Mammary epithelial cell (primary cell): ENCODE measurements at regions of chr7 and their contacts with region 1.

Region 1: DNA sequence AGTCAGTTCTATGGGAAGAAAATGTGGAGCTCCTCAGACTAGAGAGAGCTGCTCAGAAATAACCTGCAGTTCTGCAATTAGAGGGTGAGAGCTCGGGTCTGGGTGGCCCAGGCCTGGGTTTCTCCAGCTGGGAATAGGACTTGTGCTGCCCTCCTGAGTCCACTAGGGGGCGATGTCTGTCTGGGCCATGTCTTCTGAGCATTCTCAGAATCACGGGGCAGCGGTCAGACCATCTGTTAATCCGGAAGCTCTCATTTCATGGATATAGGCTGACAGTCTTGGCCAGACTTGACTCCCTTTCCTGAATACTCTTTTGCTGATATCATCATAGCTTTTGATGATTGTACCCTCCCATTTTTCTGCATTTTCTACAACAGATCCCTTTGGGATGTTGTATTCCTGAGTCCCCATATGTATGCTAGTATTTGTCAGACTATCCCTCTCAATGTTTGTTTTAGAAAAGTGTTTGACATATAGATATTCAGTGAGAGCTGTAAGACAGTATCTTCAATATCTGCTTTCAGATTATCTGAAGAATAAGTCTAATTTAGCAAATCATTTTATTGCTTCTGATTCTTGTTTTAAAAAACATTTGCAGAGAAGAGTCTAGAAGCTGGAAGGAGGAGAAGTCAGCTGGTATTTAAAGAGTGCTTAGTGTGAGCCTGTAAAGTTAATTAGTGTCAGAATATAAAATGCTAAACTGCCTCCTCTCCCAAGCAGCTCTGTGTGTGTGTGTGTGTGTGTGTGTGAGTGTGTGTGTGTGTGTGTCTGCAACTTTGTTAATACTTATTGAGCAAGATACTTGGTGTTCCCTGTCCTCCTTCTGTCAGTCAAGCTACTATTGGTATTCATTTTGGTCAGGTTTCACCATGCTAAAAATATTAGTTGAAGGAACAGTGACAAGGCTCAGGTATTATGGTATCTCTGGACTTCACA is 38.0 kb downstream of the STARD3NL start:
- DNase-seq: peak; percentile 40
- H3K4me3 ChIP-seq: no peak overlapping the region
- H3K27ac ChIP-seq: no peak overlapping the region
- H3K4me1 ChIP-seq: no peaks in the 10 kb centered on the region
- H3K27me3 ChIP-seq: no peaks in the 10 kb centered on the region
- CTCF ChIP-seq: peak; percentile 86 to 94

Region 2: DNA sequence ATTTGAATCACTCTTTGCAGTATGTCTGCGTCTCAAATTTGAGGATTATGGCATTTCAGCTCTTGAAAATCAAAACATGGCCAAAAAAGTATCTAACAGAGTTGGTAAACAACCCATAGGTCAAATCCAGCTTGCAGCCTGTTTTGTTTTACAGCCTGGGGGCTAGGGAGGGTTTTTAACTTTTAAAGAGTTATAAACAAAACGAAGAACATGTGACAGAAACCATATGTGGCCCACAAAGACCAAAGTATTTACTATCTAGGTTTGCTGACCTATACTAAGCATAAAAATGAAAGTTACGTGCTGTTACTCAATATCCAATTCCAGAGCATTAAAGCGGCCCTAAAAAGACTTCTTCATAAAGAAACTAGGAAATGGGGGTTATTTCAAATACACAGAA is 93.5 kb before region 1 on chr7:
- CTCF ChIA-PET with region 1: no interaction called
- dilution Hi-C with region 1: no loop called
- in situ Hi-C with region 1: no loop called
- intact Hi-C with region 1: no loop called
- DNase-seq: no peak
- H3K4me3 ChIP-seq: no peak overlapping the region
- H3K27ac ChIP-seq: no peak overlapping the region
- H3K4me1 ChIP-seq: no peaks in the 10 kb centered on the region
- H3K27me3 ChIP-seq: peaks cover 1% of the 10 kb centered on the region
- CTCF ChIP-seq: no peak

Region 3: GRCh38 chr7:38178004-38178694 is 37.9 kb before region 1 on chr7 and contains the start of gene STARD3NL:
- CTCF ChIA-PET with region 1: interaction called, 3 read pairs
- dilution Hi-C with region 1: no loop called
- in situ Hi-C with region 1: no loop called
- intact Hi-C with region 1: loop called (anchors 1 kb)
- DNase-seq: peak; percentile 100
- H3K4me3 ChIP-seq: peak within 1 kb of the TSS; percentile 71 to 91 (median 84)
- H3K27ac ChIP-seq: peak within 1 kb of the TSS; percentile 84
- H3K4me1 ChIP-seq: peaks cover 16% of the 10 kb centered on the region
- H3K27me3 ChIP-seq: no peaks in the 10 kb centered on the region
- CTCF ChIP-seq: no peak
- total RNA-seq, gene STARD3NL: 27.9 to 32.2 TPM